ENCODE measurements at regions of chr18 and their contacts with region 1.

Region 1: GRCh38 chr18:75209129-75209950 is at the start of gene PTGR3:
- DNase-seq: peak in 9 of 10 donors; percentile 49 to 84 (median 74)
- H3K4me3 ChIP-seq: peak within 1 kb of the TSS; percentile 58 to 97 (median 89)
- H3K27ac ChIP-seq: peak within 1 kb of the TSS; percentile 74 to 99 (median 96)
- H3K27me3 ChIP-seq: no peaks in the 10 kb centered on the region
- CTCF ChIP-seq: peak in 1 of 56 donors; percentile 5
- total RNA-seq, gene PTGR3: 32.1 to 76.5 (median 56.0) TPM

Region 2: DNA sequence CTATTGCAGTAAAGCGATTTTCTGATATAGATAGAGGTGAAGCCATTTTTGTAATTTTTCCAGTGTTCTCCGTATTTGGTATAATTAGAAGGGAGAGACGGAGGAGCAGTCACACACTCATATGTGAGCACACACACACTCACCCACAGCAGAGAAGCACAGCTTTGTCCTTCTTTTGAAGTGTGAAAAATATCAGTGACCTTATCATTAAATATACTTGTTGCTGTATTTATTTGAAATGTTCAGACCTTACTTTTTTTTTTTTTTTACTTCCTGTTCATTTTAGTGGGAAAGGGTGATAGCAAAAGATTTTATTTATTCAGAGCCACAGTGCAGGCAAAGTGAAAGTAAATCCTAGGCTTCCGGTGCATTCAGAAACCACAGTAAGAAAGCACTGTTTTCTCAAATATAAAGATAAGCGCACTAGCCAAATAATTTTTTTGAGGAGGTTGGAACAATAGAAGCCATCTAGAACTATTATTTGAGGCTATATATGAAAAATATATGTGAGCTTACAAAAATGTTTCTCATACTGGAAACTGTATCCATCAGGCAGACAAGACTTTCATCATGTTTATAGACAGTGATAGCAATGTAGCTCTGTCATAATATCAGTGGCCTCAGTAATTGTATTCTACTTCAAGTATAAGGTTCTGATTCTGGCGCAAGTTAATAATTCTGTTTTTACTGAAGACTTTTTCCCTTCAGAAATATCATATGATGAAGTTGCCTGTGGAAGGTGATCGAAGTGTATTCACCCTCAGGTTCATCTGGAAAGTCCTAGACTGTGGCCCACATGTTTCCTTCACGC is 38.5 kb after region 1 on chr18:
- intact Hi-C with region 1: loop called (anchors 5 kb)
- DNase-seq: no peak
- H3K4me3 ChIP-seq: peak overlapping the region; percentile 14 to 72 (median 53)
- H3K27ac ChIP-seq: peak overlapping the region; percentile 1 to 91 (median 79)
- H3K27me3 ChIP-seq: no peaks in the 10 kb centered on the region
- CTCF ChIP-seq: no peak

Region 3: DNA sequence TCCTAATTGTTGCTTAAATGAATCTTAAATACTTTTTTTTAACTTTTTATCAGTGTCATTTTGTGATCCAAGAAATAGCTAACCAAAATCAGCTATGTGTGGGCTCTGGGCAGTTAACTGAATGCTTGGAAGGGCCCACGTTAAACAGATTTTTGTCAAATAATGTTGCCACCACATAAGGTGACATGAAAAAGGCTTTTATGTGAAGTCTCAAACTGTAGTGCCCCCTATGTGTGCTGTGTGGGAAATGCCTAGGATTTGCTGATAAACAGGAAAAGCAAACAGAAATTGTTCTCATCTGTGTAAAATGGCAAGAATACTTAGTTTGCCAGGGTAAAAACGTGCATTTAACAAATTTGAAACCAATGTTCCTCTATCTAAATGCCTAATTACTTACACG is 1043.5 kb after region 1 on chr18:
- intact Hi-C with region 1: loop called in 1 of 2 experiments (anchors 10 kb)
- DNase-seq: peak in 1 of 10 donors; percentile 53
- H3K4me3 ChIP-seq: no peak overlapping the region
- H3K27ac ChIP-seq: no peak overlapping the region
- H3K27me3 ChIP-seq: peaks cover 0 to 9% (median 0%) of the 10 kb centered on the region in 45 donors
- CTCF ChIP-seq: peak in 54 of 56 donors; percentile 16 to 65 (median 51)